GM12878 (cell line): ENCODE measurements at regions of chr1 and their contacts with region 1.

Region 1: GRCh38 chr1:104132382-104132973 is 382.8 kb downstream of the AMY1C start:
- DNase-seq: no peak
- ATAC-seq: peak; percentile 79
- H3K4me3 ChIP-seq: no peak overlapping the region
- H3K27ac ChIP-seq: no peak overlapping the region
- H3K4me1 ChIP-seq: no peaks in the 10 kb centered on the region
- H3K27me3 ChIP-seq: no peaks in the 10 kb centered on the region
- CTCF ChIP-seq: peak; percentile 27 to 57 (median 55); a peak in 5 of 6 replicates
- EP300 ChIP-seq: no peak
- POLR2A ChIP-seq: no peak
- RAD21 ChIP-seq: peak; percentile 72

Region 2: DNA sequence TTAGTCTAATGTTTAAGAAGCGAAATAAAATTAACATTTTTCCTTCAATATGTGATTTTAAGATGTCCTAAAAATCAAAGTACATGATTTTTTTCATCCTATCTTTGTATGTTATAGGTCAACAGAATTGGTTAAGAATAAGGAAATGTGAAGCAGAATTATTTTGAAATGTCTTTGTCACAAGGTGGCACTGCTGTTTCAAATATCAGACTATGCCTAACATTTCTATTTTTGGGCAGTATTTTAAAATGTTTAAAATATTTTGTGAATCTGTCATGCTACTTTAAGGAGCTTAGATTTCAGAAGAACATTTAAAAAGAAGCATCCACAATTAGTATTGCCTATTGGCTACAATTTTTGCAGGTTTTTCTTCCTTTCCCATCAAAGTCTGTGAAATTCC is 344.1 kb before region 1 on chr1:
- CTCF ChIA-PET with region 1: interaction called, 5 read pairs
- POLR2A ChIA-PET with region 1: no interaction called
- RAD21 ChIA-PET with region 1: no interaction called
- SMC1A ChIA-PET with region 1: interaction called, 3 read pairs
- in situ Hi-C with region 1: no loop called
- intact Hi-C with region 1: loop called (anchors 1 kb)
- DNase-seq: no peak
- ATAC-seq: 0 out of 3 replicates have a peak, but pooled peaks have one; percentile 39
- H3K4me3 ChIP-seq: no peak overlapping the region
- H3K27ac ChIP-seq: no peak overlapping the region
- H3K4me1 ChIP-seq: no peaks in the 10 kb centered on the region
- H3K27me3 ChIP-seq: no peaks in the 10 kb centered on the region
- CTCF ChIP-seq: peak in 2 of 3 experiments; percentile 19 to 53; a peak in 2 of 6 replicates
- EP300 ChIP-seq: no peak
- POLR2A ChIP-seq: no peak
- RAD21 ChIP-seq: peak; percentile 56

Region 3: GRCh38 chr1:103948526-103948925 is 184.0 kb before region 1 on chr1:
- CTCF ChIA-PET with region 1: interaction called, 4 read pairs
- POLR2A ChIA-PET with region 1: no interaction called
- RAD21 ChIA-PET with region 1: no interaction called
- SMC1A ChIA-PET with region 1: interaction called, 5 read pairs
- in situ Hi-C with region 1: no loop called
- intact Hi-C with region 1: loop called (anchors 1 kb)
- DNase-seq: no peak
- ATAC-seq: no peak
- H3K4me3 ChIP-seq: no peak overlapping the region
- H3K27ac ChIP-seq: no peak overlapping the region
- H3K4me1 ChIP-seq: no peaks in the 10 kb centered on the region
- H3K27me3 ChIP-seq: no peaks in the 10 kb centered on the region
- CTCF ChIP-seq: peak in 2 of 3 experiments; percentile 6; a peak in 1 of 6 replicates
- EP300 ChIP-seq: no peak
- POLR2A ChIP-seq: no peak
- RAD21 ChIP-seq: peak; percentile 41; the same call in 1 of the 2 replicates

Region 4: DNA sequence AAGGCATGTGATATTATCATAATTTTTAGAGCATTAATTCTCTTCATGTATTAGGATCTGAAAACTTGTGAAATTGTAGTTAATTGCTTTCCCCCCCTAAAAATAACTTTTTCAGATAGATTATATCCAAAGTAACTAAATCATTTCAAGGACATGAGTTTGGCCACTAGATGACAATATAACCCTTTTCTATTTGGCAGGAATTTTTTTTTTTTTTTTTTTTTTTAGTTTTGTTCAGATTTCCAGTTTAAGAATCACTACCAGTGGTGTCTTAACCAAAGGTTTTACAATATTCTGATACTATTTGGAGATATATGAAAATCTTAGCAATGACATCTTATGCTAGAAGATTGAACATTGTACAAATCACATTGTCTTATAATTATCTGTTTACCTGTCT is 12.0 kb before region 1 on chr1:
- CTCF ChIA-PET with region 1: interaction called, 11 read pairs
- POLR2A ChIA-PET with region 1: no interaction called
- RAD21 ChIA-PET with region 1: no interaction called
- SMC1A ChIA-PET with region 1: interaction called, 3 read pairs
- in situ Hi-C with region 1: no loop called
- intact Hi-C with region 1: no loop called
- DNase-seq: no peak
- ATAC-seq: no peak
- H3K4me3 ChIP-seq: no peak overlapping the region
- H3K27ac ChIP-seq: no peak overlapping the region
- H3K4me1 ChIP-seq: no peaks in the 10 kb centered on the region
- H3K27me3 ChIP-seq: no peaks in the 10 kb centered on the region
- CTCF ChIP-seq: no peak; a peak in 1 of 6 replicates
- EP300 ChIP-seq: no peak
- POLR2A ChIP-seq: no peak
- RAD21 ChIP-seq: no peak